ENCODE measurements at regions of chr1 and their contacts with region 1.

Region 1: GRCh38 chr1:40849801-40850592 is 12.2 kb downstream of the CITED4 start:
- DNase-seq: peak; percentile 61 to 96 (median 78)

Region 2: GRCh38 chr1:40612345-40612831 is 237.6 kb before region 1 on chr1:
- intact Hi-C with region 1: loop called (anchors 5 kb)
- DNase-seq: peak in 8 of 10 donors; percentile 35 to 92 (median 72)

Region 3: DNA sequence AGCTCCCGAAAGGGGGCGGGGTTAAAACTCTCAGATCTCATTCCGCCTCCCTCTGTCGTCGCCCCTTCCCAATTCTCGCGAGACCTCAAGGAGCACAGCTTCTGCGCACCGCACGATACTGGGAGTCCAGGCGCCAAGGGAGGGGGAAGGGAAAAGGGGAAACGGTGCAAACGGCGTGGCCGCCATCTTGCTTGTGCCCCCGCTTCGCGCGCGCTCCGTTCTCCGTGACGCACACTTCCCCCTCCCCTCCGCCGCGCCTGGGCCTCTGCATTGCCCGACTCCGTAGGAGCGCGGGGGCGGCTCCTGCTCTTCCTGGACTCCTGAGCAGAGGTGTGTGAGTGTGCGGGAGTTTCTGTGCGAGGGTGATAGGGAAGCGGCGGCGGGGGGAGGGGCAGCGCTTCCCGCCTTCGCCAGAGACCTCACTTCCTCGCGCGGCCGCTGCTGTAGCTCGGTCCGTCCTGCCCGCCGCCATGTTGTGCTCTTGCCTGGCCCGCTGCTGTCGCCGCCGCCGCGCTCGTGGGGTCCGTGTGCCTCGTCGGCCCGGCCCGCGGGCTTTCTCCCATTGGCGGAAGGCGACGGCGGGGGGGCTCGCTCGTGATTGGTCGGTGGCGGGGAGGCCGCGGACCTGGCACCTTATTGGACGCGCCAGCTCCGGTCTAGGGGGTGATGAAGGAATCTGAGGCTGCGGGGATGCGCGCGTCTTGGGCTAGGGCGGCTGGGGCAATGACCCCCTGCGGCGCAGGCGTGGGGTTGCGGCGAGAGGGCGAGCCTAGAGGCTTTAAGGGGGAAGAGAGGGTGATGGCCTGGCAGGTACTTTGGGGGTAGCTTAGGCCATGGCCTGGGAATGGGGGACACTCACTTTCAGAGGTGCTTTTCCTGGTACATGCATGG is 158.2 kb before region 1 on chr1 and contains the start of gene NFYC:
- intact Hi-C with region 1: loop called (anchors 10 kb)
- DNase-seq: peak; percentile 91 to 99 (median 95)

Region 4: DNA sequence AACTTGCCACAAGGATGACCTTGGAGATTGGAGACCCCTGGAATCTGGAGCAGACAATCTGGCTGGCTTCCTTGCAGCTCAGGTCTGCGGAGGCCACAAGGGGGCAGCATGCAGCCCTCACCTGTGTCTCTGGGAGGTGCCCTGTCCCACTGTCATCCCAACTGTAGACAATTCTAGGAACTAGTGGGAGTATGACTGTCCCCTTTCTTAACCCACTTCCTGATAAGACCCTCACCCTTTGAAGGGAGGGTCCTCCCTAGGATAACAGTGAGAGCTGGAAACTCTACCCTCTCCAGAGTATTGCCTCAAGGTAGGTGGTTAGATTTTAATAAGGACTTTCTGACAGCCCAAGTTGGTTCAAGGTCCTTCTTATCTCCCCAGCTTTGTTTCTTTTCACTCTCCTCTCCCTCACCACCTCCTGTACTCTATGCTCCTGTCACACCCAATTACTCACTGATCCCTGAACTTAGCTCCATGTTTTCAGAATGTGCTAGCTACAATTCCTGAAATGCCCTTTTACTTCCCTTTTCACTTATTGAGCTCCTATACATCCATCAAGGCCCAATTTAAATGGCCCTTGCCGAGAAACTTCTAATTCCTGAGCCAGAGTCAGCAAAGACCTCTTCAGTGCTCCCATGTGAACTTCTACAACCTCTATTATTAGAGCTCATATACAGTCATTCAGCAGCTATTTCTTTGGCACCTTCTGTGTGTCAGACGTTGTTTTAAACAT is 75.6 kb before region 1 on chr1:
- intact Hi-C with region 1: loop called (anchors 2 kb)
- DNase-seq: peak in 7 of 10 donors; percentile 44 to 93 (median 55)

Region 5: GRCh38 chr1:40915581-40915980 is 65.6 kb after region 1 on chr1:
- intact Hi-C with region 1: no loop called
- DNase-seq: peak in 1 of 10 donors; percentile 39

Region 6: GRCh38 chr1:40951943-40952743 is 102.1 kb after region 1 on chr1:
- intact Hi-C with region 1: loop called (anchors 1 kb)
- DNase-seq: peak; percentile 60 to 97 (median 76)

Region 7: GRCh38 chr1:41341772-41342562 is 492.0 kb after region 1 on chr1:
- intact Hi-C with region 1: no loop called
- DNase-seq: peak in 2 of 10 donors; percentile 85 to 90